H1 (cell line): ENCODE measurements at regions of chr19 and their contacts with region 1.

Region 1: GRCh38 chr19:32675720-32676185 is at the start of gene RGS9BP:
- DNase-seq: peak in 1 of 2 experiments; percentile 78
- H3K4me3 ChIP-seq: peak within 1 kb of the TSS; percentile 69 to 91 (median 83)
- H3K27ac ChIP-seq: no peak within 1 kb of the TSS; the same call in 1 of the 2 replicates
- H3K4me1 ChIP-seq: peaks cover 8 to 16% (median 11%) of the 10 kb centered on the region in 4 experiments; a peak in 6 of 7 replicates
- H3K27me3 ChIP-seq: peaks cover 20 to 33% (median 26%) of the 10 kb centered on the region in 4 experiments
- CTCF ChIP-seq: no peak
- EP300 ChIP-seq: no peak
- POLR2A ChIP-seq: no peak
- RAD21 ChIP-seq: no peak
- total RNA-seq, gene RGS9BP: 0.26 and 0.33 TPM in 2 replicates

Region 2: DNA sequence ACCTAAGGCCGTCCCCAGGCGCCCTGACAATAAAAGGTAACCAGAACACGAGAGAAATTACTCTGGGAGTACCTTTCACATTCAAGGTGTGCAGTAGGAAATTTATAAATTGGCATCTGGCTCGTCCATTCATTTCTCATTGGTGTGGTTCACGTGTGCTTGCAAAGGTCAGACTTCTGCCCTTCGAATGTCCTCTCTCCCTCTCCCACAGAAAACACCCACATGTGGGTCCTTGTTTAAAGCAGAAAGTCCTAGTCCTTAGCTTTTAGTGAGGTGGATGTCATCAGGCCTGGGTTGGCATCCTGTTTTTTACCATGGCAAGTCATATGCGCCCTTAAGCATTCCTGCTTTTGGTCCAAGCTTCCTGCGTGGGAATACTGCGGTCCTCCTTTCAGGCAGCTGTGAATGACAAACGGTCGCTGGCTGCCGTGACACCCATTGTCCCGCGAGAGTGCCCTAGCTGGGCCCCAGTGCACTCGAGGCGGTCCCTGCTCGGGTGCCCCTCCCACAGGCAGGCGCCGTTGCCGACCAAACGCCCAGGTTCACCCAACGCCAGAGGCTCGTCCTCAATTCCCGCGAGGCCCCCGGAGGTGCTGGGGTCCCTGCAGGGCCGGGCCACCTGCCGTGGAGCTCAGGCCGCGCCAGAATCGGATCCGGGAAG is 15.7 kb after region 1 on chr19 and contains the start of gene NUDT19:
- CTCF ChIA-PET with region 1: interaction called, 5 read pairs
- POLR2A ChIA-PET with region 1: interaction called, 12 read pairs
- DNase-seq: peak in 1 of 2 experiments; percentile 60
- H3K4me3 ChIP-seq: peak within 1 kb of the TSS; percentile 32 to 64 (median 35)
- H3K27ac ChIP-seq: no peak within 1 kb of the TSS
- H3K4me1 ChIP-seq: no peaks in the 10 kb centered on the region; a peak in 1 of 7 replicates
- H3K27me3 ChIP-seq: peaks cover 0 to 21% (median 10%) of the 10 kb centered on the region in 4 experiments; a peak in 6 of 7 replicates
- CTCF ChIP-seq: no peak
- EP300 ChIP-seq: no peak
- POLR2A ChIP-seq: 0 out of 3 replicates have a peak, but pooled peaks of 1 of the 2 experiments have one; percentile 23
- RAD21 ChIP-seq: no peak
- total RNA-seq, gene NUDT19: 2.4 and 3.3 TPM in 2 replicates